Heart left ventricle (tissue), 16 donors: ENCODE measurements at regions of chr1 and their contacts with region 1.

Region 1: GRCh38 chr1:193059268-193060225 is at the starts of genes RO60 and UCHL5:
- DNase-seq: peak; percentile 96 to 98 (median 97)
- ATAC-seq: peak; percentile 97 to 99 (median 98)
- H3K4me3 ChIP-seq: peak within 1 kb of the TSS; percentile 58 to 94 (median 84)
- H3K27ac ChIP-seq: peak within 1 kb of the TSS; percentile 92 to 99 (median 96)
- H3K4me1 ChIP-seq: peaks cover 9 to 52% (median 39%) of the 10 kb centered on the region in 12 donors
- H3K27me3 ChIP-seq: no peaks in the 10 kb centered on the region
- CTCF ChIP-seq: peak in 2 of 12 donors; percentile 15 to 18
- POLR2A ChIP-seq: peak; percentile 44 to 82
- total RNA-seq, gene RO60: 48.3 to 67.7 (median 55.6) TPM
- total RNA-seq, gene UCHL5: 28.8 to 45.3 (median 37.1) TPM

Region 2: DNA sequence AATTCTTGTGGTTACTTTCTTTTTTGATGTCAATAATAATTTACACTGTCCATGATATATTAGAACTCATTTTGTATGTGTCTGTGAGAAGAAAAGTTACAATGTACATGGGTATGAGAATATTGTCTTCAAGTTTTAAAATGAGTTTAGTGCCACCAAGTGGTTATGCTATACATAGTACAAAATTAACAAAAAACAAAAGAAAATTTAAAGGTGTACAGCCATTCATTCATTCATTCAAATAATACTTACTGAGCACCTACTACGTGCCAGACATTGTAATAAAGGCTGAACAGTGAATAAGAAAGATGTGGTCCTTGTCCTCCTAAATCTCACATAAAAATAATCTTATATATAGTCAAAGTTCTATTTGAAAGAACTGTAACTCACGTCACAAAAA is 28.1 kb before region 1 on chr1:
- intact Hi-C with region 1: no loop called
- DNase-seq: no peak
- ATAC-seq: no peak
- H3K4me3 ChIP-seq: no peak overlapping the region
- H3K27ac ChIP-seq: no peak overlapping the region
- H3K4me1 ChIP-seq: peaks cover 0 to 10% (median 0%) of the 10 kb centered on the region in 12 donors
- H3K27me3 ChIP-seq: no peaks in the 10 kb centered on the region
- CTCF ChIP-seq: peak in 4 of 12 donors; percentile 16 to 35 (median 34)
- POLR2A ChIP-seq: no peak

Region 3: GRCh38 chr1:193085263-193085662 is 25.7 kb after region 1 on chr1:
- intact Hi-C with region 1: loop called in 1 of 10 experiments (anchors 1 kb)
- DNase-seq: no peak
- ATAC-seq: peak in 2 of 4 donors; percentile 24 to 71
- H3K4me3 ChIP-seq: no peak overlapping the region
- H3K27ac ChIP-seq: no peak overlapping the region
- H3K4me1 ChIP-seq: peaks cover 0 to 16% (median 0%) of the 10 kb centered on the region in 12 donors
- H3K27me3 ChIP-seq: no peaks in the 10 kb centered on the region
- CTCF ChIP-seq: no peak
- POLR2A ChIP-seq: no peak

Region 4: DNA sequence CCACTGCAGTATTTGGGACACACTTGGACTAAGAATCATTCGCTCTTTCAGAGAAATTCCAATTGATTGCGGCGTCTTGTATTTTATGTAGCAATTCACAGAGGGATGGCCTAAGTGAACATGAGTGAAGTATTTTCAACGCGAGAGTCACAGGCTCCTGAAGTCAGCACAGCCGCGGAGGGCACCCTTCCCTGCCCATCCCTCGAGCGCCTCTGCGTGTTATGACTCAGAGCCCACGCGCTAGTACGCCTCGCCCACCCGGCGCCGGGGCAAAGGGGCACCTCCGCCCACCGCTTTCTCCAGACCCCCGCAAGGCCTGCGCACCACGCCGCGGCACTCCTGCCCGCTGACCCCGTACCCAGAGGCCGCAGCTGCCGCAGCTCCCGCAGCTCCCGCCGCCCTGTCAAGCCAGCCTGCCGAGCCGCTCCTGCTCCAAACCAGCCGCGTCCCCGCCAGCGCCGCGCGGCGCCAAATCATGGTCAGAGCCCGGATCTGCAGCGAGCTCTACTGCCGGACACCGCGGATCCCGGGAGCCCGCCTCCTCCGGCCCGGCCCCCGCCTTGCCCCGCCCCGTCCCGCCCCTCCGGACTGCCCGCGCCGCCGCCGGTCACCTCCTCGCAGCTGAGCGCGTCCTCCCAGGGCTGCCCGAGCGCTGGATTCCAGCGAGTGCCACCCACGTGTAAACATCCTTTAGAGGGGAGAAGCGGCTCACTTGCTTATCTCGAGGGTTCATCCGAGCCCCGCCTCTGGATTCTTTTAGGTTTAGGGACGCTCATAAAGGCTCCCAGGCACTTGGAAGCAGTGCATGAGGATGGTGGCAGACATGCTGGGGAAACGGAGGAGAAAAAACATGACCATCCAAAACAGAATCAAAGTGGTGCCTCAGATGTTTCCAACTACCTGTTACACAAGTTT is 45.6 kb after region 1 on chr1 and contains the start of gene GLRX2:
- intact Hi-C with region 1: loop called in 4 of 10 experiments (anchors 1 to 10 kb)
- DNase-seq: peak; percentile 87 to 94 (median 90)
- ATAC-seq: peak; percentile 93 to 99 (median 98)
- H3K4me3 ChIP-seq: peak within 1 kb of the TSS; percentile 78 to 96 (median 88)
- H3K27ac ChIP-seq: peak within 1 kb of the TSS; percentile 70 to 99 (median 92)
- H3K4me1 ChIP-seq: peaks cover 3 to 25% (median 13%) of the 10 kb centered on the region in 12 donors
- H3K27me3 ChIP-seq: no peaks in the 10 kb centered on the region
- CTCF ChIP-seq: peak in 5 of 12 donors; percentile 5 to 28 (median 18)
- POLR2A ChIP-seq: peak in 1 of 2 donors; percentile 86
- total RNA-seq, gene GLRX2: 11.0 to 102 (median 28.5) TPM

Region 5: DNA sequence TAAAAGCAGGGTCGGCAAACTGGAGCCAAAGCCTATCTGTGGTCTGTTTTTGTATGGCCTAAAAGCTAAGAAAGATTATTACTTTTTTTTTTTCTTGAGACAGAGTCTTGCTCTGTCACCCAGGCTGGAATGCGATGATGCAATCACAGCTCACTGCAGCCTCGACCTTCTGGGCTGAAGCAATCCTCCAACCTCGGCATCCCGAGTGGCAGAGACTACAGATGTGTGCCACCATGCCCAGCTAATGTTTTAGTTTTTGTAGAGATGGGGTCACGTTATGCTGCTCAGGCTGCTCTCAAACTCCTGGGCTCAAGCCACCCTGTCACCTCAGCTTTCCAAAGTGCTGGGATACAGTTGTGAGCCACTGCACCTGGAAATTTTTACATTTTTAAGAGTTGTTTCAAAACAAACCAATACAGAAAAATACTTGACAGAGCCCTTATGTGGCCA is 52.1 kb after region 1 on chr1:
- intact Hi-C with region 1: loop called in 3 of 10 experiments (anchors 5 to 10 kb)
- DNase-seq: peak in 2 of 5 donors; percentile 70 to 75
- ATAC-seq: peak; percentile 6 to 80 (median 56)
- H3K4me3 ChIP-seq: no peak overlapping the region
- H3K27ac ChIP-seq: peak overlapping the region in 3 of 12 donors; percentile 38 to 49 (median 43)
- H3K4me1 ChIP-seq: peaks cover 0 to 19% (median 4%) of the 10 kb centered on the region in 12 donors
- H3K27me3 ChIP-seq: no peaks in the 10 kb centered on the region
- CTCF ChIP-seq: no peak
- POLR2A ChIP-seq: no peak

Region 6: GRCh38 chr1:193121616-193122593 is 62.4 kb after region 1 on chr1 and contains the start of gene CDC73:
- intact Hi-C with region 1: loop called in 7 of 10 experiments (anchors 5 kb)
- DNase-seq: peak; percentile 97 to 99 (median 98)
- ATAC-seq: peak; percentile 98 to 100 (median 98)
- H3K4me3 ChIP-seq: peak within 1 kb of the TSS; percentile 60 to 89 (median 78)
- H3K27ac ChIP-seq: peak within 1 kb of the TSS; percentile 88 to 99 (median 95)
- H3K4me1 ChIP-seq: peaks cover 4 to 41% (median 21%) of the 10 kb centered on the region in 12 donors
- H3K27me3 ChIP-seq: no peaks in the 10 kb centered on the region
- CTCF ChIP-seq: peak; percentile 84 to 99 (median 92)
- POLR2A ChIP-seq: peak in 1 of 2 donors; percentile 85
- total RNA-seq, gene CDC73: 26.6 to 57.3 (median 53.6) TPM

Region 7: DNA sequence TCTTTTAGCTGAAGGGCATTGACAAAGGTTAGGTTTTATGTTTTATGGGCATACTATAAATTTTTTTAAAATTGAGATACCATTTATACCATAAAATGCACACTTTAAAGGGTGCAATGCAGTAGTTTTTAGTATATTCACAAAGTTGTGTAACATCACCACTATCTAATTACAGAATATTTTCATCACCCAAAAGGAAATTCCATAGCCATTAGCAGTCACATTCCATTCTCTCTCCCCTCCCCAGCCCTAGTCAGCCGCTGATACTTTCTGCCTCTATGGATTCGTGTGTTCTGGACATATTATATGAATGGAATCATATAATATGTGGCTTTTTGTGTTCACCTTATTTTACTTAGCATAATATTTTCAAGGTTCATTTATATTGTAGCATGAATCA is 262.7 kb after region 1 on chr1:
- intact Hi-C with region 1: no loop called
- DNase-seq: no peak
- ATAC-seq: no peak
- H3K4me3 ChIP-seq: no peak overlapping the region
- H3K27ac ChIP-seq: no peak overlapping the region
- H3K4me1 ChIP-seq: no peaks in the 10 kb centered on the region
- H3K27me3 ChIP-seq: no peaks in the 10 kb centered on the region
- CTCF ChIP-seq: no peak
- POLR2A ChIP-seq: no peak